ENCODE measurements at regions of chr11 and their contacts with region 1.

Region 1: GRCh38 chr11:9972989-9973388 is 309.1 kb downstream of the SWAP70 start:
- DNase-seq: peak; percentile 16
- ATAC-seq: peak; percentile 67; the same call in 1 of the 2 replicates
- H3K4me3 ChIP-seq: no peak overlapping the region
- H3K27ac ChIP-seq: no peak overlapping the region
- H3K4me1 ChIP-seq: no peaks in the 10 kb centered on the region
- H3K27me3 ChIP-seq: no peaks in the 10 kb centered on the region
- CTCF ChIP-seq: peak; percentile 66 to 77 (median 69); a peak in 5 of 6 replicates
- POLR2A ChIP-seq: no peak
- RAD21 ChIP-seq: peak; percentile 80

Region 2: GRCh38 chr11:9613118-9613829 is 359.7 kb before region 1 on chr11:
- CTCF ChIA-PET with region 1: no interaction called
- POLR2A ChIA-PET with region 1: no interaction called
- RAD21 ChIA-PET with region 1: no interaction called
- intact Hi-C with region 1: loop called (anchors 10 kb)
- DNase-seq: peak; percentile 92
- ATAC-seq: peak; percentile 80
- H3K4me3 ChIP-seq: peak overlapping the region; percentile 42 to 58
- H3K27ac ChIP-seq: peak overlapping the region; percentile 92
- H3K4me1 ChIP-seq: peaks cover 29 to 61% of the 10 kb centered on the region in 2 experiments
- H3K27me3 ChIP-seq: no peaks in the 10 kb centered on the region
- CTCF ChIP-seq: peak; percentile 87 to 98 (median 94)
- POLR2A ChIP-seq: no peak
- RAD21 ChIP-seq: peak; percentile 94

Region 3: DNA sequence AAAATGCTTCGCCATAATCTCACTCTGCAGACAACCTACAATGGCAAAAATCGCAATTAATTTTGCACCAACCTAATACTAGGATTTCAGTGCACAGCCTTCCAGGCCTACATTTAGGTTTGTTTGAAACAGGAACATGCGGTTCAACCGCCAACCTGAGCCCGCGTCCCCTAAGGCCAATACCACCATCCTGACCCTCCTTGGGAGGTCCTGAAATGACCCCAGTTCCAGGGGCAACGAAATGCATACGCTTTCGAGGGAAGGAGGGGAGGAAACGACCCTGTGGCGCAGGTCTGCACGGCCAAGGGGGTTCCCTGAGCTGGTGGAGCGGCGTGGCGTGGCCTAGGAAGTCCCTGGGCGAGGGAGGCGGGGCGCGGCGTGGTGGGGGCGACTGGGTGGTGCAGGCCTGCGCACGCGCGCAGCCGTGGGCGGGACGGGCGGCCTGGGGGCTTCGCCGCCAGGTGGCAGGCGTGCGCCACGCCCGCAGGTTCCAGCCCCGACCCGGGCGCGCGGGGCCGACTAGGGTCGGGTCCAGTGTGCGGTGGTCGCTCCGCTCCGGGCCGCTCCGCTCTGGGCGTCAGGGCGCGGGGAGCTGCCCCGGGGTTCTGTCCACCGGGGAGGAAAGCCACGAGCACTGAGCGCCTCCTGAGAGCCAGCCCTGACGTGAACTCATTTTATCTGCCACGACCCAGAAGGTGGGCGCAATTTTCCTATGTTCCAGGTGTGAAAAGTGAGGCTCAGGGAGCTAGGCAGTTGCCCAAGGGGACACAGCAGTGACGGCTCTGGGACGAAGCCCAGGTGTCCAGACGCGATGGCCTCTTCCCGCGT is 215.0 kb before region 1 on chr11:
- CTCF ChIA-PET with region 1: interaction called, 13 read pairs
- POLR2A ChIA-PET with region 1: no interaction called
- RAD21 ChIA-PET with region 1: no interaction called
- intact Hi-C with region 1: loop called (anchors 1 kb)
- DNase-seq: peak; percentile 42
- ATAC-seq: peak; percentile 59
- H3K4me3 ChIP-seq: peak overlapping the region; percentile 71 to 74
- H3K27ac ChIP-seq: peak overlapping the region; percentile 95
- H3K4me1 ChIP-seq: peaks cover 17 to 34% of the 10 kb centered on the region in 2 experiments
- H3K27me3 ChIP-seq: no peaks in the 10 kb centered on the region
- CTCF ChIP-seq: peak in 2 of 3 experiments; percentile 55 to 66; a peak in 4 of 6 replicates
- POLR2A ChIP-seq: no peak
- RAD21 ChIP-seq: peak; percentile 65

Region 4: DNA sequence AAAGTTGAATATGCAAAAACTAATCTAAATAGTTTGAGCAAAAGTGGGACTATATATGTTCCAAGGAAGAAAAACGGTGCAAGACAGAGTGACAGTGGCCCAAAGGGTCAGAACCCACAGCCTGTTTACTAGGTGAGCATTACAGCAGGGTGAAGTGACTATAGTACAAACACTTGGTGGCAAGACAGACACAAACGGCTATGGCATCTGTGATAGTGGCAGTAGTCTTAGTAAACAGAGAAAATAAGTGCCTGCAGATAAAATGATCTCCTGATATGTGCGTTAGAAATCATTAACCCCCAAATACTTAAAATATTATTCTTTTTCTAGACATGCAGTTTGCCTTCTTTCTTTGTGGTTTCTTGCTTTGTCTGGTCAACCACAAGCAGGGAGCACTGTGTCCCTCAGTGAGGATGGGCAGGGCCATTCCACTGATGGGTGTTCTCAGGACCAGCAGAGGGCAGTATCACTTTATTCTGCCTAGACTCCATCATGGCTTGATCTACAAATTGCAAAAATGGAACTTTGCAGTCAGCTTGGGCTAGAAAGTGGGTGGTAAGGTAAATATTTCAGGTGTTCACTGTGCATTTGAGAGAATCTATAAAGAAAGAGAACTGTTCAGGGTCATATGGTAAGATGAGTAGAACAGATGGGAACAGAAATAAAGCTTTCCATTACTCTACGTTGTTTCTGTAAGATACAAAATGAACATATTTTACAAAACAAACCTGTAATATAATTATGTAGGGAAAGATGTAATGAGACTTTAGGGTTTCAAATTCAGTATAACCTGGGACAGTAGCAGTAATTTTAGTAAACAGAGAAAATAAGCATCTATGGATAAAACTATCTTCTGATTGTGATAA is 110.9 kb before region 1 on chr11:
- CTCF ChIA-PET with region 1: no interaction called
- POLR2A ChIA-PET with region 1: no interaction called
- RAD21 ChIA-PET with region 1: no interaction called
- intact Hi-C with region 1: loop called (anchors 2 kb)
- DNase-seq: peak; percentile 31
- ATAC-seq: peak; percentile 98
- H3K4me3 ChIP-seq: no peak overlapping the region
- H3K27ac ChIP-seq: no peak overlapping the region
- H3K4me1 ChIP-seq: no peaks in the 10 kb centered on the region; a peak in 1 of 4 replicates
- H3K27me3 ChIP-seq: no peaks in the 10 kb centered on the region
- CTCF ChIP-seq: peak; percentile 78 to 90 (median 82)
- POLR2A ChIP-seq: no peak
- RAD21 ChIP-seq: peak; percentile 86

Region 5: DNA sequence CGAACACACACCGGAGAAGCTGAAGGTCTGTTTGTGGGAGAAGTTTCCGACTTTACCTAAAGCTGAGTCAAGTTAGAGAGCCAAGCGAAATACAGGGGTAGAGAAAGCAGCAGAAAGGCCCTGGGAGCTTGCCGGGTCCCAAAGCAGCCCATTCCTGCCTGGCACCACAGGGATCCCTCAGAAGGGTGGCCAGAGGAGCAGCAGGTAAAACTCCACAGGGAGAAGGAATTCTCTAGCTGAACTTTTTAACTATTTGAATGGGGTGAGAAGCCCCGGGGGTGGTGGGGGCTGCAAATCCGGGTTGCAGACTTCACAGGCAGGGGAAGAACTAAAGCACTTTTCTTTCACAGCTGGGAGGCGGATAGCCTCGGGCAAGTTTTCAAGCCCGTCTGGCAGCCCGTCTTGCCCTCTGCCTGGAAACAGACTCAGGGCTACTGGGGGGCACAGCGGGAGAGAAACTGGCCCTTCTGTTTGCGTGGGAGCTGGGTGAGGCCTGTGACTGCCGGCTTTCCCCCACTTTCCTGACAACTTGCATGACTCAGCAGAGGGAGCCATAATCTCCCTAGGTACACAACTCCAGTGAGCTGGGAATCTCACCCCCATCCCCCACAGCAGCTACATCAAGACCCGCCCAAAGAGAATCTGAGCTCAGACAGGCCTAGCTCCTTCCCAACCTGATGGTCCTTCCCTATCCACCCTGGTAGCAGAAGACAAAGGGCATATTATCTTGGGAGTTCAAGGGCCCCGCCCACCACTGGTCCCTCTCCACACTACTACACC is 10.0 kb after region 1 on chr11:
- CTCF ChIA-PET with region 1: interaction called, 11 read pairs
- POLR2A ChIA-PET with region 1: no interaction called
- RAD21 ChIA-PET with region 1: no interaction called
- intact Hi-C with region 1: no loop called
- DNase-seq: peak; percentile 31
- ATAC-seq: peak; percentile 86
- H3K4me3 ChIP-seq: no peak overlapping the region
- H3K27ac ChIP-seq: peak overlapping the region; percentile 42
- H3K4me1 ChIP-seq: peaks cover 11 to 28% of the 10 kb centered on the region in 2 experiments
- H3K27me3 ChIP-seq: no peaks in the 10 kb centered on the region
- CTCF ChIP-seq: no peak
- POLR2A ChIP-seq: no peak
- RAD21 ChIP-seq: 0 out of 2 replicates have a peak, but pooled peaks have one; percentile 28

Region 6: GRCh38 chr11:10322830-10323792 is 350.1 kb after region 1 on chr11:
- CTCF ChIA-PET with region 1: no interaction called
- POLR2A ChIA-PET with region 1: no interaction called
- RAD21 ChIA-PET with region 1: no interaction called
- intact Hi-C with region 1: loop called (anchors 5 kb)
- DNase-seq: peak; percentile 81
- ATAC-seq: peak; percentile 76
- H3K4me3 ChIP-seq: peak overlapping the region; percentile 8 to 32
- H3K27ac ChIP-seq: no peak overlapping the region
- H3K4me1 ChIP-seq: peaks cover 12 to 21% of the 10 kb centered on the region in 2 experiments; a peak in 3 of 4 replicates
- H3K27me3 ChIP-seq: no peaks in the 10 kb centered on the region
- CTCF ChIP-seq: peak; percentile 25 to 87 (median 66); a peak in 5 of 6 replicates
- POLR2A ChIP-seq: no peak
- RAD21 ChIP-seq: peak; percentile 89